ENCODE measurements at regions of chr3 and their contacts with region 1.

Region 1: GRCh38 chr3:191139736-191140135 is 59.3 kb upstream of the OSTN start:
- DNase-seq: peak; percentile 25
- CTCF ChIP-seq: no peak

Region 2: DNA sequence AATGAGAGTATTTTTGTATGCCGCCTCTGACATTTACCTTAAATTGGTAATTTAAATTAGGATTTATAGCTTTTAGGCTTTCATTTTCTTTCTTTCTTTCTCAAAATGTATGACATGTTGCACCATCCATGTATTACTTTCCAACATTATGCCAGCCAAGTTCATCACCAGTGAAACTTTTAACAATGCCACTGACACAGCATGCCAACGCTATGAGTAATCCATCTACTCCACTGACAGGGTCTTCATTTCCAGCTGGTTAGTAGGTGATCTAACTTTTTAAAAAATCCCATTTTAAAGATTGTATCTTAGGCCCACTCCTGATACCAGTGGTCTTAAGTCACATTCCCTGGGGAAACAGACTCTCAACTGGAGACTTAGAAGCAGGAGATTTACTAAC is 773.6 kb before region 1 on chr3:
- in situ Hi-C with region 1: no loop called
- DNase-seq: no peak
- CTCF ChIP-seq: no peak

Region 3: DNA sequence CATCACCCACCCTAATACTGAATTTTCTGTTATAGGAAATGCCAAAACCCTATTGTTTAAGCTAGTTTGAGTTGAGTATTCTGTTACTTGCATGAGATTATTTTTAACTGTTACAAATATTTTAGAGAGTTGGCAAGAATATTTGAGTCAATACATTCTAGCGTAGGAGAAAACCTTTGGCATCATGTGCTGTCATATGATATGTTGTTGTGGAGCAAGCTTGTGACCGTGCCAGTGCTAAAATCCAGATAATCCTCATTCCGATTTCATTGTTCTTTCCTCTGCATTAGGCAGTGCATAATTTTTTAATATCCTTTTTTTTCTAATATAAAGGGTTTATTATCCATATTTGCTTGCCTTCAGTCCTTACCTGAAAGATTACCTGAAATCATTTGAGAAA is 109.2 kb before region 1 on chr3:
- in situ Hi-C with region 1: no loop called
- DNase-seq: no peak
- CTCF ChIP-seq: no peak

Region 4: DNA sequence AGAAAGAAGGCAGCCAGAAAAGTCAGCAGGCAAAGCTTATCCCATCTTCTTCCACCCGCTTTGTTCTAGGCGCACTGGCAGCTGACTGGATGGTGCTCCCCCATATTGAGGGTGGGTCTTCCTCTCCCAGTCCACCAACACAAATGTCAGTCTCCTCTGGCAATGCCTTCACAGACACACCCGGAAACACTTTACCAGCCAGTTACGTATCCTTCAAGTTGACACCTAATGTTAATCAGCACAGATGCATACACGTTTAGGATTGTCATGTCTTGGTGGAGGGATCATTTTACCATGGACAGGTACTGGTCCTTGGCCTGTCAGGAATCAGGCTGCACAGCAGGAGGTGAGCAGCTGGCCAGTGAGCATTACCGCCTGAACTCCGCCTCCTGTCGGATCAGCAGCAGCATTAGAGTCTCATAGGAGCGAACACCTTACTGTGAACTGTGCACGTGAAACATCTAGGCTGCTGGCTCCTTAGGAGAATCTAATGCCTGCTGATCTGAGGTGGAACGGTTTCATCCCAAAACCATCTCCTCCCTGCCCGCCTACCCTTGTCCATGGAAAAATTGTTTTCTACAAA is 262.1 kb after region 1 on chr3:
- in situ Hi-C with region 1: loop called (anchors 10 kb)
- DNase-seq: no peak
- CTCF ChIP-seq: no peak